Activated naive CD8-positive, alpha-beta T cell treated with anti-CD3 and anti-CD28 coated beads, Interleukin-2, amount 10 ng/mL, durations not matched to agents 7 days and 5 days (primary cell): ENCODE measurements at regions of chr5 and their contacts with region 1.

Region 1: DNA sequence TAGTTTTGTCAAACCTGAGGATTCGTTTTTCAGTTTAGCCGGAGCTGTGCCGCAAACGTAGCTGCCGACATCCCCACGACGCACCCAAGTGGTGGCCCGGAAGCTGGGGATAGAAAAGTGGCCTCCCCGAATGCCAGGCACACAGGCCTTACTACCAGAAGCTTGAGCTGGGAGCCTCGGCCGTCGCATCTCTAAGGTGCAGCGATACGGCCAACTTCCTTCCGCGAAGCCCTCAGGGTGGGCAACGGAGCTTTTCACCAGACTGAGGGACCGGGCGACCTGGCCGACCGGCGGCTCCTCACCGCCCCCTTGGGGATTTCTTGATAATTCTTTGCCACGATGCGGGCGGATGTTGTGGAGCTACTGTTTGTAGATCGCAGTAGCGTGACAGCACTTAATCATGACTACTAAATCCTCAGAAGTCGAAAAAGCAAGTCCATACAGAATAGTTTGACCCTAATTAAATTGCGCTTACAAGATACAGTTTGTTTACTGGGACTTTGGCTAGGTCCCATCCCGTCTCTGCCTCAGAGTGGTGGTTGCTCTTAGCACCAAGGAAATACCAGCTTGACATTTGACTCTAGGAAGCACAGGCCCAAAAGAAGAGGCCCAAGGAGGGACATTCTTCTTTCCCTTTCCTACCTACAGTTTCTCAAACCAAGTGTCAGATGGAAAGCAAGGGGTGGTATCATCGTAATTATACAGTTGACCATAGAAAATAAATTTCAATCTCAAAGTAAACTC is 613 bp upstream of the TMEM267 start:
- DNase-seq: peak; percentile 86
- ATAC-seq: peak; percentile 62
- H3K4me3 Mint-ChIP-seq: peak overlapping the region; percentile 98
- H3K27ac Mint-ChIP-seq: peak overlapping the region; percentile 100
- H3K4me1 Mint-ChIP-seq: peaks cover 34% of the 10 kb centered on the region
- H3K27me3 Mint-ChIP-seq: no peaks in the 10 kb centered on the region

Region 2: DNA sequence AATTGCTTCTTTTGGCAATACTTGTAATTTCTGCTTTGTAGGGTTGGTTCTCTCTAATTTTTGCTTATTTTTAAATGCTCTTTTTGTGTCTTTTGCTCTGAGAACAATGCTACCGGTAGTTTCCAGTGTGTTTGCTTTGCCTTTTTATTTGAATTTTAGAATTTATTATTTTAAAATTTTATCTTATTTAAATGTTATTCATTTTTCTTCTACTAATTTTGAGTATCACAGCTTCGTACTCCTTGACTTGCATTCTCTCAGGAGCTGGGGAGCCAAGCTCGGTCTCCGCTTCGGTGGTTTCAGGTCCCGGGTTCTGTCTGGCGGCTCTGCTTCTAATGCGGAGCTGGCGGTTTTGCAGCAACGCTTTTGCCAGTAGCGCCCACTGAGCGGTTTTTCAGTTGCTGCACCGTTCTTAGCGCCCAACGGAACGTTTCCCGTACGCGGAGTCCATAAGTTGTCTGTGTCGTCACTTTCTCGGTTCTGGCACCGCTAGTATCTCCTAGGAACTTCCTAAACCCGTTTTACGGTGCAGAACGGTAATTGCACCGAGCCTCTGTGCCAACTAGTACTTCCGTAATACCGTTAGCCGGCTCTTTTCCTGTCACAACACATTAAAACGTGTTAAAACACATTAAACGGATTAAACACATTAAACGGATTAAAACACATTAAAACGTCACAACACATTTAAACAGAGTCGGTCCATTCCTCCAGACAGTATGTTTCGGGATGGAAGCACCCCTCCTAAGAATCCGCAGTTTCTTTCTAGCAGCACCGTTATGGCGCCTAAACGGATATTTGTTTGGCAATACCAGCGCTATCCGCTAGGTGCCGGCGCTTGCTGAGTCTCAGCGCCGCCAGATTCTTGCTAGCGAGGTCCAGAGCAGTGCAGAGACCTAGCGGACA is 489.8 kb before region 1 on chr5:
- POLR2A ChIA-PET with region 1: interaction called, 11 read pairs
- DNase-seq: peak; percentile 84
- ATAC-seq: peak; percentile 59
- H3K4me3 Mint-ChIP-seq: peak overlapping the region; percentile 98
- H3K27ac Mint-ChIP-seq: peak overlapping the region; percentile 98
- H3K4me1 Mint-ChIP-seq: peaks cover 23% of the 10 kb centered on the region
- H3K27me3 Mint-ChIP-seq: no peaks in the 10 kb centered on the region

Region 3: GRCh38 chr5:43066799-43067741 is 417.2 kb before region 1 on chr5:
- POLR2A ChIA-PET with region 1: interaction called, 26 read pairs
- DNase-seq: peak; percentile 85
- ATAC-seq: peak; percentile 39
- H3K4me3 Mint-ChIP-seq: peak overlapping the region; percentile 99
- H3K27ac Mint-ChIP-seq: peak overlapping the region; percentile 100
- H3K4me1 Mint-ChIP-seq: peaks cover 30% of the 10 kb centered on the region
- H3K27me3 Mint-ChIP-seq: no peaks in the 10 kb centered on the region

Region 4: DNA sequence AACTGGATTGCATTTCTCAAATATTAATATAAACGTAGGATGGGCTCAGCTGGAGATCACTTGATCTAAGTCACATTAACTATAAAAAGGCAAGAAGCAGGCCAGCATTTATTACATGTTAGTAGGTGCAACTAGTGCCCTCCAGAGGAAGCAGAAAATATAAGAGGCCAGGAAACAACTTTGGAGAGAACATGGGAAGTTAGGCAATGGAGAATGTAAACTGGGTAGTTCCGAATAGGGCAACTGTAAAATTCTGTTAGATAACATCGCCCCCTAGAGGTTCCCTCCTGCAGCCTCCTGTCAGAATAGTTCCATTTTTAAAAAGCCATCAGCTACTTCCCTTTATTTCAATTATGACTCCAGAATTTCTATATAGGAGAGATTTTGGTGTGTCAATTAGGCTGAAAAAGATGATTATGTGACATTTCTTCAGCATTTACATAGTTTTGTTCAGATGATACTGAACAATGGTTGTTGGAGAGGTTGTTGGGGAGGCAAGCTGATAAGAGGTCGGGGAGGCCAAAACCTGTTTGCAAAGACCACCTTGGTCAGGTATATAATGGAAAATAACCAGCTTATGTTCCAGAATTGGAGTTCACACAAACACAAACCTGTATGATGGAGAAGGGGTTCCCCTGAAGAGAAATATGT is 94.5 kb before region 1 on chr5:
- POLR2A ChIA-PET with region 1: interaction called, 12 read pairs
- DNase-seq: no peak
- ATAC-seq: peak; percentile 81
- H3K4me3 Mint-ChIP-seq: no peak overlapping the region
- H3K27ac Mint-ChIP-seq: no peak overlapping the region
- H3K4me1 Mint-ChIP-seq: peaks cover 17% of the 10 kb centered on the region
- H3K27me3 Mint-ChIP-seq: no peaks in the 10 kb centered on the region

Region 5: DNA sequence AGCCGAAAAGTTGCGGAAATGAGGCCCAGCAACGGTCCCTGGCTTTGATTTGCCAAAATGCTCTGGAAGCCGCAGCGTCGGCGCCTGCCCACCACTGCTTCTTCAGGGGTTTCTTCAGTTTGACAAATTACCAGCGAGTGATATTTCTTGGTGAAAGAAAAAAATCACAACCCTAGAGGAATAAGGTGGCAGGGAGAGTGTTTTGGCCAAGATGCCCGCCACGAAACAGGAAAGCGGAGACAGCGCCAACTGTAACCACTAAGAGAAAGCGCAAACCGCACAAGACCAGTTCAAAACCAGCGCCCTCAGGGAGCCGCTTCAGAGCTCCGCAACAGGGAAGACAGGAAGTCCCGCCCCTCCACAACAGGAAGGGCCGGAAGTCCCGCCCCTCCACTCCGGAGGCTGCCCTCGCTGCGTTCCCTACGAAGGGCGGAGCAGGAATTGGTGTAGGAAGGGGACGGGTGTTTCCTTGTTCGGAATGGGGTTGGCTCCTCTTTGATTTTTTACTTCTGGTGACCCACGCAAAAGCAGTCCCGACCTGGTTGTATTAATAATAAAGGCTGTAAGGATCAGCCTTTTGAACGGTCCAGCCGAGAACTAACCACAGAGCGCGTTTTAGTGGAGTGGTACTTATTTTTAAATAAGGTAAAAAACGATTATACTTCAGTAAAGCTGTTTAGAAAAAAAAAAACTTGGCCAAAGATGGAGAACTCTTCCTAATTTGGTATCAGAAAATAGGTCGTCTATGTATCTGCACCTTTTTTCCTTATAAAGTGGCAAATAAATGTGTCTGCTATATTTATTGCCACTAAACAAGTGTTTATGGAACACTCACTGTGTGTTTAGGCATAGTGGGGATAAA is 30.8 kb after region 1 on chr5 and contains the start of gene C5orf34:
- POLR2A ChIA-PET with region 1: interaction called, 67 read pairs
- DNase-seq: peak; percentile 92
- ATAC-seq: peak; percentile 94
- H3K4me3 Mint-ChIP-seq: peak within 1 kb of the TSS; percentile 86
- H3K27ac Mint-ChIP-seq: peak within 1 kb of the TSS; percentile 93
- H3K4me1 Mint-ChIP-seq: peaks cover 27% of the 10 kb centered on the region
- H3K27me3 Mint-ChIP-seq: no peaks in the 10 kb centered on the region
- total RNA-seq, gene C5orf34: 9.3 to 9.8 TPM